ENCODE measurements at regions of chr10 and their contacts with region 1.

Region 1: DNA sequence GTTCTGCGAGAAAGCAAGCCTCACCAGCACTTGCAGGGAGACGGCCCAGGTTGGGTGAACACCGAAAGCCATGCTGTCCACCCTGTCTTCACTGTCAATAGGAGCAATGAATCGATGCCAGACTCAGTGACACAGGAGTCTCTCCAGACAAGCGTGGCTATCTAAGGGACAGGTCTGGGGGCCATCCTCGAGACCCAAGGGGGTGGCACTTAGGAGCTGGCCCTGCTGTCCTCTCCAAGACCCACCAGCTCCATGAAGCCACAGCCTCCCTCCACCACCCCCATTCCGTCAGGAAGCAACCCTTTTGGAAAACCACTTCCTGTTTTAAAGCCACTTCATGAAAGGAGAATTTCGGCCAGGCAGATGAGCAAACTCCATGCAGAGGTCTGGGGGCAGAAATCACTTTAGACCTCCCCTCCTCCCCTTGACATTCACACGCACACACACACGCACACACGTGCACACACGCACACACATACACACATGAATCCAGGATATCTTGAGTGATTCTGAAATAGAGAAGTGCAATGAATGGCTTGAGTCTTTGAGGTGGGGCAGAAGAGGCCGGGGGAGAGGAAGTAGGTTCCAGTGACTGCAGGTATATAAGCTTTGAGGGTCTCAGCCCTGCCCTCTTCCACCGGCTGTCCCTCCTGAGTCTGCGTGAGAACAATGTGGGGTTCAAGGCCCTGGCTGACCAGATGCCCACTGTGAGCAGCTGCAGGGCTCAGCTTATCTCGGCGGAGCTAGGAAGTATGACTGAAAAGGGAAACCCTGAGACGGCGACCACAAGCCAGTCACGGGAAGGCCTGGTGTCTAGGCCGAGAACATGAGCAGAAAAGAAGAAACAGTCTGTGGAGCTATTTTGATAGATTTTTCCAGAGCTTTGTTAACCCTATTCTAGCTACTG is 25.0 kb downstream of the RGS10 start:
- DNase-seq: no peak
- H3K4me3 ChIP-seq: no peak overlapping the region
- H3K27ac ChIP-seq: no peak overlapping the region
- H3K4me1 ChIP-seq: peaks cover 15% of the 10 kb centered on the region
- H3K27me3 ChIP-seq: no peaks in the 10 kb centered on the region
- CTCF ChIP-seq: no peak

Region 2: GRCh38 chr10:119333146-119333792 is 184.2 kb before region 1 on chr10:
- CTCF ChIA-PET with region 1: no interaction called
- dilution Hi-C with region 1: no loop called
- in situ Hi-C with region 1: no loop called
- intact Hi-C with region 1: no loop called
- DNase-seq: peak; percentile 30
- H3K4me3 ChIP-seq: no peak overlapping the region
- H3K27ac ChIP-seq: no peak overlapping the region
- H3K4me1 ChIP-seq: peaks cover 10% of the 10 kb centered on the region
- H3K27me3 ChIP-seq: no peaks in the 10 kb centered on the region
- CTCF ChIP-seq: no peak

Region 3: GRCh38 chr10:119478111-119478802 is 39.2 kb before region 1 on chr10:
- CTCF ChIA-PET with region 1: no interaction called
- dilution Hi-C with region 1: loop called (anchors 5 kb)
- in situ Hi-C with region 1: no loop called
- intact Hi-C with region 1: no loop called
- DNase-seq: no peak
- H3K4me3 ChIP-seq: no peak overlapping the region
- H3K27ac ChIP-seq: no peak overlapping the region
- H3K4me1 ChIP-seq: no peaks in the 10 kb centered on the region
- H3K27me3 ChIP-seq: no peaks in the 10 kb centered on the region
- CTCF ChIP-seq: no peak

Region 4: GRCh38 chr10:119650692-119651513 is 133.4 kb after region 1 on chr10 and contains the start of gene BAG3:
- CTCF ChIA-PET with region 1: no interaction called
- dilution Hi-C with region 1: no loop called
- in situ Hi-C with region 1: no loop called
- intact Hi-C with region 1: no loop called
- DNase-seq: peak; percentile 92
- H3K4me3 ChIP-seq: peak within 1 kb of the TSS; percentile 95 to 97 (median 96)
- H3K27ac ChIP-seq: peak within 1 kb of the TSS; percentile 77
- H3K4me1 ChIP-seq: peaks cover 24% of the 10 kb centered on the region
- H3K27me3 ChIP-seq: no peaks in the 10 kb centered on the region
- CTCF ChIP-seq: no peak
- total RNA-seq, gene BAG3: 41.0 to 117 TPM